ENCODE measurements at regions of chr20 and their contacts with region 1.

Region 1: GRCh38 chr20:45971675-45972499 is at the start of gene ZNF335:
- DNase-seq: peak; percentile 99
- ATAC-seq: peak; percentile 82
- H3K4me3 Mint-ChIP-seq: peak within 1 kb of the TSS; percentile 94
- H3K27ac Mint-ChIP-seq: peak within 1 kb of the TSS; percentile 100
- H3K4me1 Mint-ChIP-seq: peaks cover 25% of the 10 kb centered on the region
- H3K27me3 Mint-ChIP-seq: no peaks in the 10 kb centered on the region
- CTCF ChIP-seq: no peak
- total RNA-seq, gene ZNF335: 39.2 and 49.6 TPM in 2 replicates

Region 2: GRCh38 chr20:45798935-45799642 is 172.8 kb before region 1 on chr20:
- CTCF ChIA-PET with region 1: interaction called, 18 read pairs
- POLR2A ChIA-PET with region 1: interaction called, 4 read pairs
- intact Hi-C with region 1: no loop called
- DNase-seq: peak; percentile 25
- ATAC-seq: peak; percentile 95
- H3K4me3 Mint-ChIP-seq: no peak overlapping the region
- H3K27ac Mint-ChIP-seq: no peak overlapping the region
- H3K4me1 Mint-ChIP-seq: peaks cover 9% of the 10 kb centered on the region
- H3K27me3 Mint-ChIP-seq: no peaks in the 10 kb centered on the region
- CTCF ChIP-seq: no peak

Region 3: DNA sequence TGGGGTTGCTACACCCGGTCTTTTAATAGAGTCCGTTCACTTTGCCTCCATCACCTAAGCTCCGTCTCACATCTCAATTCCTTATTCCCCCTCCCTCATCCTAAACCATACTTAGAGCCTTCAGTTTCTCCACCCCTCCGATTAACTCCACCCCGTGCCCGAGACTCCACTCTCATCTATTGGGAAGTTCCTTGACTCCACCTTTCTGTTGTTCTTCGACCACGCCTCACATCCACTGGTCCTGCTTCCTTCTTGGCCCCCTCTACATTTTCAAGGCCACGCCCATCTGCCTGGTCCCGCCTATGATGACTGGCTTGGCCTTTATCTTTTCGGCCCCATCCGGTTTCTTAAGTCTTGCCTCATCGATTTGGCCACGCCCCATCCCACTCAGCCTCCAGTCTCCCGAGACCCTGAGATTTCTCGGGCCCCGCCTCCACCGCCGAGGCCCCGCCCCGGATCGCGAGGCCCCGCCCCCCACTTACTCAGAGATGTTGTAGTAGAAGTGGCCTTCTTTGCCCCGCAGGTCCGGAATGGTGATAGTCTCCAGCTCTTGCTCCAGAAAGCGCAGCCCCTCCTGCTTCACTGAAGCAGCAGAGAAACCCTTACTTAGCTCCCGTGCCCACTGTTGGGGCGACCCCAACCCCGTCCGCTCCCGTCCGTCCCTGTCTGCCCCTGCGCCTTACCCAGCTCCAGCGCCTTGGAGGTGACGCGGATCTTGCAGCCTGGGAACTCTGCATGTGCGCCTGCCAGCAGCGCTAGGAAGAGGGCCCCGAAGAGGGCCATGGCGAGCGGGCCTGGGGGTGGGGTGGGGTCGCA is 61.0 kb before region 1 on chr20:
- CTCF ChIA-PET with region 1: no interaction called
- POLR2A ChIA-PET with region 1: interaction called, 9 read pairs
- intact Hi-C with region 1: loop called (anchors 2 kb)
- DNase-seq: peak; percentile 97
- ATAC-seq: peak; percentile 92
- H3K4me3 Mint-ChIP-seq: peak overlapping the region; percentile 90
- H3K27ac Mint-ChIP-seq: peak overlapping the region; percentile 83
- H3K4me1 Mint-ChIP-seq: peaks cover 31% of the 10 kb centered on the region
- H3K27me3 Mint-ChIP-seq: peaks cover 6% of the 10 kb centered on the region
- CTCF ChIP-seq: no peak

Region 4: GRCh38 chr20:46013826-46014516 is 42.1 kb after region 1 on chr20:
- CTCF ChIA-PET with region 1: interaction called, 15 read pairs
- POLR2A ChIA-PET with region 1: interaction called, 11 read pairs
- intact Hi-C with region 1: loop called (anchors 2 kb)
- DNase-seq: peak; percentile 73
- ATAC-seq: peak; percentile 90
- H3K4me3 Mint-ChIP-seq: peak overlapping the region; percentile 16
- H3K27ac Mint-ChIP-seq: peak overlapping the region; percentile 53
- H3K4me1 Mint-ChIP-seq: peaks cover 47% of the 10 kb centered on the region
- H3K27me3 Mint-ChIP-seq: peaks cover 47% of the 10 kb centered on the region
- CTCF ChIP-seq: peak; percentile 44

Region 5: DNA sequence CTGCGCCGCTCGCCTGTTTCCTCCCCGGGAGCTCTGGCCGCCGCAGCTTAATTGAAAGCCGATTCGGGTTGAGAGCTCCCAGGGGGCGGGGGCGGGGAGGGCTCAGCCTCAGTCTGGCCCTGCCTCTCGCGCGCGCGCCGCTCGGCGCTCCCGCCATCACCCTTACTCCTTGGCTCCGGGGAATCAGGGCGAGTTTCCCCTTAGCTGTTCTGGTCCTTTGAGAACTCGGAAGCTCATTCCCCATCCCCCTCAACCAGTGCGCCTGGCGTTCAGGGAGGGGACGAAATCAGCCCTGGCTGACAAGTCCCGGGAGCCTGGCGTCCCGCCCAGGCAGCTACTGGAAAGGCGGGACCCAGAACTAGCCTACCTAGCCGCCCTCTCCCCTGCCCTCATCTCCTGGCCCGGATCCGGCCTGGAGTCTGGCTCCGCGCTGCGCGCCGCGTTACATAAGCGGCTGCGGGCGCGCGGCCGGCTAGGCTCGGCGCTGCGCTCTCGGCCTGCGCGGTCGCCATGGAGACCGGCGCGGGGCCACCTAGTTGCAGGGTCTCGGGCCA is 59.9 kb after region 1 on chr20:
- CTCF ChIA-PET with region 1: no interaction called
- POLR2A ChIA-PET with region 1: no interaction called
- intact Hi-C with region 1: no loop called
- DNase-seq: no peak
- ATAC-seq: no peak
- H3K4me3 Mint-ChIP-seq: no peak overlapping the region
- H3K27ac Mint-ChIP-seq: no peak overlapping the region
- H3K4me1 Mint-ChIP-seq: no peaks in the 10 kb centered on the region
- H3K27me3 Mint-ChIP-seq: peaks cover 63% of the 10 kb centered on the region
- CTCF ChIP-seq: no peak

Region 6: DNA sequence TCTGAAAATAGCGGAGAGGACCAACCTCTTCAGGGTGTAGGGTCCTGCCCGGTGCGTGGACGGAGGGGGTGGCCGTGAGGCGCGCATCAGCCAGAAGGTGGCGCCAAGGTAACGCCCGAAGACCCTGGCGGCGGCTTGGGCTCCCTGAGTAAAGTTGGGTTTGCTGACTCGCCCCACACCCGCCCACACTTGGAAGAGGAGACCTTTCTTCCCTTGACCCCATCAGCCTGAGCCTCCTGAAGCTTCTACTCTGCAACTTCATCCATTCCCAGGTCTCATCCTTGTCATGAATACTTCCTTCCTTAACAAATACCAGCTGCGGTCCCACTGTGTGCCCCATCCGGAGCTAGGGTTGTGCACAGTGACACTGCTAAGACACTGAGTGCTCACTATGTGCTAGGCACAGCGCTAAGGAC is 160.8 kb after region 1 on chr20:
- CTCF ChIA-PET with region 1: no interaction called
- POLR2A ChIA-PET with region 1: interaction called, 17 read pairs
- intact Hi-C with region 1: no loop called
- DNase-seq: peak; percentile 66
- ATAC-seq: peak; percentile 76
- H3K4me3 Mint-ChIP-seq: no peak overlapping the region
- H3K27ac Mint-ChIP-seq: peak overlapping the region; percentile 10
- H3K4me1 Mint-ChIP-seq: peaks cover 71% of the 10 kb centered on the region
- H3K27me3 Mint-ChIP-seq: peaks cover 9% of the 10 kb centered on the region
- CTCF ChIP-seq: peak; percentile 20